T-cell (primary cell): ENCODE measurements at regions of chr11 and their contacts with region 1.

Region 1: GRCh38 chr11:112113539-112114457 is 27.1 kb downstream of the SDHD start:
- DNase-seq: peak in 2 of 35 experiments; percentile 7 to 61
- ATAC-seq: peak in 3 of 4 experiments; percentile 49 to 57 (median 52)
- H3K4me3 ChIP-seq: no peak overlapping the region
- H3K4me3 Mint-ChIP-seq: no peak overlapping the region
- H3K27ac ChIP-seq: no peak overlapping the region
- H3K27ac Mint-ChIP-seq: no peak overlapping the region
- H3K4me1 ChIP-seq: no peaks in the 10 kb centered on the region
- H3K4me1 Mint-ChIP-seq: peaks cover 3 to 4% (median 4%) of the 10 kb centered on the region in 3 donors
- H3K27me3 ChIP-seq: no peaks in the 10 kb centered on the region
- H3K27me3 Mint-ChIP-seq: peaks cover 0 to 2% of the 10 kb centered on the region in 2 donors

Region 2: DNA sequence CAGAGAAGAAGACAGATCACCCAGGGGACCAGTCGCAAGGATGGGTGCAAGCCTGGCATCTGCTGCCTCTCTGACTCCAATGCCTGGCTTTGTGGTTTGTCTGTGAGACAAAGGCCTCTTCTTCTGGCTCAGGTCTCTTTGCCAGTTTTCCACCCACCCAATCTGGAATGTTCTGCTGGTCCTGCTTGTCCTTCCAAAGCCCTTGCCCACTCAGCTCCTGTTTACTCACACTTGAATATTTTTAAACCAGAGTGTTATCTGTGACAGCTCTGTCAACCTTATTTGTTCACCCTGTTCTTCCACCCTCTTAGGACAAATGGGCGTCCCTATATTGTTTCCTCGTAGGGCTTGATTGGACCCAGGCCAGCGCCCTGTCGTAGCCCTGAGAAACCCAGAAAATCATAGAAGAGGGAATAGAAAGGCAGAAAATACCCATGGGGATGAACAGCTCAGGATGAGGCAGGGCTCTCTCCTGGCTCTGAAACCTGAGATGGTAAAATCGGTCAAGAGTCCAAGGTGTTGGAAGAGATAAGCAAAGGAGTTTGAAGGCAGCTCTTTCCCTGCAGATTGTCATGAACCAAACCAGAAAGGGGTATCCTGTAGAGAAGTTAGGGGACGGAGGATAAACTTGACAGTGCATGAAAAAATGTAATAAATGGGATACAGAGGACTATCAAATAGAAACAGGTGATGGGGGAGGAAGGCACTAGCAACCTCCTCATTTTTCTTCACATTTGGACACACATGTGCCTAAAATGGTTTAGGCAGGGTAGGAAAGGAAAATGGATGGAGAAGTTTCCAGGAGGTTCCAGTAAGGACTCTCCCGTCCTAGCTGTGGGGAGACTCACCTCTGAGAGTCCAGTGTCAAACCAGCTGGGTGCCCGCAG is 202.9 kb before region 1 on chr11:
- CTCF ChIA-PET with region 1: interaction called in 1 of 2 experiments, 14 read pairs
- POLR2A ChIA-PET with region 1: no interaction called
- DNase-seq: no peak
- ATAC-seq: no peak
- H3K4me3 ChIP-seq: no peak overlapping the region
- H3K4me3 Mint-ChIP-seq: no peak overlapping the region
- H3K27ac ChIP-seq: no peak overlapping the region
- H3K27ac Mint-ChIP-seq: no peak overlapping the region
- H3K4me1 ChIP-seq: peaks cover 0 to 4% of the 10 kb centered on the region in 2 experiments
- H3K4me1 Mint-ChIP-seq: no peaks in the 10 kb centered on the region
- H3K27me3 ChIP-seq: peaks cover 10 to 44% of the 10 kb centered on the region in 2 experiments
- H3K27me3 Mint-ChIP-seq: peaks cover 38 to 51% of the 10 kb centered on the region in 2 donors